ENCODE measurements at regions of chr2 and their contacts with region 1.

Region 1: DNA sequence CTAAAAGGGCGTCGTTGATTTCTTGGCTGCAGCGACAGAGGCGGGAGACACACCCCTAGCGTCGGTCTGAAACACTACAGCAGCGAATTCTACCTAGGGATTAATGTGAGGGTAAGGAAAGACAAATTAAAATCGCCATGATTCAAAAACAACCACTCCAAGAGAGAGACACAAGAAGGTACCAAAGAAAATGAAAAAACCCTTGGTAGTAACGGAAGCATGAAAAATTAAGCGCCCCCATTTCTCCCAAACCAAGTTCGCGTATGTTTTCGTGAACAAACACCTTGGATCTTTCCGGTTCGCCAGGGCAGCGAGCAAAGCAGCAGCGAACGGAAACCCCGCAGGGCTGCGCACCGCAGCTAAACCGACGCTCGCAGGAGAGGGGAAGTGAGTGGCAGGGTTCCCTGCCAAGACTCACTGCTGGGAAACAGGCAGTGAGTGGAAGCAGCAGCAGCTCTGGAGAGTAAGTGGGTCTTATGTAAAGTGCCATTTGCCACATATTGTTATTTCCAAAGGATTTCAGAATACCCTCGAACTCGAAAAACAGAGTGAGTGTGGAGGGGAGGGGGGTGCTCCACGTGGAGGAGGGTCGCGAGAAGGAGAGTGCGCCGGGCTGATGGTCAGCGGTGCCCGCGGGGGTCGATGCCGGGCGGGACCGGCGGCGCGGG is 1.0 kb downstream of the PPP3R1 start:
- DNase-seq: peak; percentile 64
- ATAC-seq: peak; percentile 70
- H3K4me3 ChIP-seq: peak overlapping the region; percentile 85
- H3K27ac ChIP-seq: peak overlapping the region; percentile 91
- H3K4me1 ChIP-seq: peaks cover 18% of the 10 kb centered on the region
- H3K27me3 ChIP-seq: no peaks in the 10 kb centered on the region
- CTCF ChIP-seq: peak; percentile 70 to 79 (median 76)
- EP300 ChIP-seq: no peak
- POLR2A ChIP-seq: no peak; the same call in 1 of the 2 replicates
- RAD21 ChIP-seq: peak; percentile 71

Region 2: DNA sequence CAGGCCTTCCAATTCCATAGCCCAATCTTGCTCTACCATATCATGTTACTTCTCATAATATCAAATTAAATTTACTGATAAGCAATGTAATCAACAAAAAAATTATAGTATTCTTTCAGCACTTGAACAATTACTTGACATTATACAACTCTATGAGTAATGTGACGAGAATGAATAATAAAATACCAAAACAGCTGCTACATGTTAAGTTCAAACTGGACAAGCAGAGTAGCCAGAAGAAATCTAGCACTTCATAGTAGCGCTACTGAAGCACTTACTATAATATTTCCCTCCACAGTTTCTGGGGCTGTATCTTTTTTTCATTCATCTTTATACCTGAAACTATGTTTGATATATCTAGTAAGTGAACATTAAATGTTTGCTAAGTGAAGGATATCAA is 13.9 kb before region 1 on chr2:
- CTCF ChIA-PET with region 1: interaction called, 3 read pairs
- POLR2A ChIA-PET with region 1: interaction called, 5 read pairs
- RAD21 ChIA-PET with region 1: interaction called, 10 read pairs
- SMC1A ChIA-PET with region 1: interaction called, 5 read pairs
- in situ Hi-C with region 1: no loop called
- intact Hi-C with region 1: no loop called
- DNase-seq: no peak
- ATAC-seq: no peak
- H3K4me3 ChIP-seq: no peak overlapping the region
- H3K27ac ChIP-seq: no peak overlapping the region
- H3K4me1 ChIP-seq: peaks cover 3% of the 10 kb centered on the region
- H3K27me3 ChIP-seq: no peaks in the 10 kb centered on the region
- CTCF ChIP-seq: no peak
- EP300 ChIP-seq: no peak
- POLR2A ChIP-seq: no peak
- RAD21 ChIP-seq: no peak

Region 3: DNA sequence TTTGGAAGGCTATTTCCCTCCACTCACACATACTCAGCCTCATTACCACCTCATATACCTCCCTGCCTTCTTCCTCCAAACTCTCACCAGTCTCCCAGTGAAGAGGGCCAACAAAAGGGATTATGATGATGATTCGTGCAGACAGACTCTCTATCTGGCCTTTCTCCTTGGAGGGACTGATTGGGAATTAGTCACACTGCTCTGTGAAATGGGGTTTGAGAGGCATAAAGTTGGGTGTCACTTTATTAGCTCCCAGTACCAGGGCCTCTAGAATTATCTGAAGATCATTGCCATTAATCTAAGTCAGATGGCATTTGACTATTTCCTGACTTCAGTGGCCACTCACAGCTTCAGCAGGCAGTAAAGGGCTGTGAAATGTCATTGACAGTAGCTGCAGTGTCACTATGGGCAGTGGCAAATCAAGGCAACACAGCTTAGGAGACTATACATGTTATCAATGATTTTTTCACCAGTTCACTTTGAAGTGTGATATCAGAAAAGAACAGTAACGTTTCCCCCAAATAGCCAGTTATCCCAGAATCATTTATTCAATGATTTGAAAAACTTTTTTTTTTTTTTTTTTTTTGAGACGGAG is 51.1 kb after region 1 on chr2:
- CTCF ChIA-PET with region 1: no interaction called
- POLR2A ChIA-PET with region 1: no interaction called
- RAD21 ChIA-PET with region 1: no interaction called
- SMC1A ChIA-PET with region 1: no interaction called
- in situ Hi-C with region 1: no loop called
- intact Hi-C with region 1: no loop called
- DNase-seq: no peak
- ATAC-seq: no peak
- H3K4me3 ChIP-seq: no peak overlapping the region
- H3K27ac ChIP-seq: no peak overlapping the region
- H3K4me1 ChIP-seq: no peaks in the 10 kb centered on the region
- H3K27me3 ChIP-seq: no peaks in the 10 kb centered on the region; a peak in 1 of 4 replicates
- CTCF ChIP-seq: no peak
- EP300 ChIP-seq: no peak
- POLR2A ChIP-seq: no peak
- RAD21 ChIP-seq: no peak

Region 4: GRCh38 chr2:68325056-68325455 is 73.7 kb after region 1 on chr2:
- CTCF ChIA-PET with region 1: no interaction called
- POLR2A ChIA-PET with region 1: no interaction called
- RAD21 ChIA-PET with region 1: no interaction called
- SMC1A ChIA-PET with region 1: no interaction called
- in situ Hi-C with region 1: no loop called
- intact Hi-C with region 1: no loop called
- DNase-seq: no peak
- ATAC-seq: no peak
- H3K4me3 ChIP-seq: no peak overlapping the region
- H3K27ac ChIP-seq: no peak overlapping the region
- H3K4me1 ChIP-seq: no peaks in the 10 kb centered on the region
- H3K27me3 ChIP-seq: peaks cover 3 to 4% of the 10 kb centered on the region in 2 experiments; a peak in 3 of 4 replicates
- CTCF ChIP-seq: no peak
- EP300 ChIP-seq: no peak
- POLR2A ChIP-seq: no peak
- RAD21 ChIP-seq: no peak

Region 5: DNA sequence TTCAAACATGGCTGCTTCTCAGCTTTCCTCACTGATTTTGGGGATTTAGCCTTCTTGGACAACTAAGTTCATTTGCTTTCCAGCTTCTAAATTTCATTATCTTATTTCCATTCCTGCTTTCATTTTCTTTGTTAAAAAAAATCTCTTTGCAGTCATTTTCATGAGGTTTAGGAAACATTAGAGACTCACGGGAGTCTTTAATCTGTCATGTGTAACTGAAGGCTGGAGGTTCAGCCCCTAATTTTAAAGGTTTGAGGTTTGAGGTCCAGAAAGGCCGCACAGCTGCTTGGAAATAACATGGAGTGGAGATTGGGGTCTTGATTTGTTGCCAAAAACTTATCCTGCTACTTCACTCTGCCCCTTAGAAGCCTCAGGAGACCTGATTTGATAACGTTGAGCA is 422.3 kb after region 1 on chr2:
- CTCF ChIA-PET with region 1: no interaction called
- POLR2A ChIA-PET with region 1: no interaction called
- RAD21 ChIA-PET with region 1: no interaction called
- SMC1A ChIA-PET with region 1: no interaction called
- in situ Hi-C with region 1: no loop called
- intact Hi-C with region 1: no loop called
- DNase-seq: no peak
- ATAC-seq: no peak
- H3K4me3 ChIP-seq: no peak overlapping the region
- H3K27ac ChIP-seq: no peak overlapping the region
- H3K4me1 ChIP-seq: no peaks in the 10 kb centered on the region
- H3K27me3 ChIP-seq: no peaks in the 10 kb centered on the region
- CTCF ChIP-seq: no peak
- EP300 ChIP-seq: no peak
- POLR2A ChIP-seq: no peak
- RAD21 ChIP-seq: no peak